SK-N-SH (cell line): ENCODE measurements at regions of chr3 and their contacts with region 1.

Region 1: GRCh38 chr3:48232734-48233133 is 8.2 kb upstream of the ZNF589 start:
- DNase-seq: peak; percentile 81
- H3K4me3 ChIP-seq: peak overlapping the region in 1 of 2 experiments; percentile 29; a peak in 1 of 4 replicates
- H3K27ac ChIP-seq: no peak overlapping the region; a peak in 1 of 4 replicates
- H3K4me1 ChIP-seq: peaks cover 0 to 2% of the 10 kb centered on the region in 2 experiments; a peak in 1 of 4 replicates
- H3K27me3 ChIP-seq: no peaks in the 10 kb centered on the region
- CTCF ChIP-seq: peak; percentile 65
- EP300 ChIP-seq: no peak
- RAD21 ChIP-seq: peak; percentile 79

Region 2: DNA sequence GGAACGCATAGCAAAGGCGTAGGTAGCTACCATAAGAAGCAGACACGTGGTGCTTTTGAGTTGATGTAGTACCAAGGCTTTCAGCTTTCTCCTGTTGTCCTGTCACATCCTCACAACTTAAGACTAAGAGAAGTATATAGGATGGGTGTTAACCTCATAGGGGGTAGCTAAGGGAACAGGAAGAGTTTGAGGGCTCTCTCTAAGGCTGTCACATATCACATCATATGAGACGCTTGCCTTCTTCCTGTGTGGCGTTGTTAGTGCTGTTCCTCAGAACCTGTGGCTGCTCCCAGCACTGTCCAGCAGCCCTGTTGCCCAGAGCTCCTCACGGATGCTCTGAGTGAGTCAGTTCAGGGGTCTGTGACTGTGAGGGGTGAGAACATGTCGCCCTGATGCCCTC is 415.1 kb before region 1 on chr3:
- CTCF ChIA-PET with region 1: no interaction called
- POLR2A ChIA-PET with region 1: no interaction called
- DNase-seq: no peak
- H3K4me3 ChIP-seq: no peak overlapping the region
- H3K27ac ChIP-seq: no peak overlapping the region
- H3K4me1 ChIP-seq: no peaks in the 10 kb centered on the region
- H3K27me3 ChIP-seq: no peaks in the 10 kb centered on the region
- CTCF ChIP-seq: no peak
- EP300 ChIP-seq: no peak
- RAD21 ChIP-seq: no peak

Region 3: GRCh38 chr3:48247401-48247811 is 14.7 kb after region 1 on chr3:
- CTCF ChIA-PET with region 1: interaction called, 10 read pairs
- POLR2A ChIA-PET with region 1: no interaction called
- DNase-seq: no peak
- H3K4me3 ChIP-seq: no peak overlapping the region
- H3K27ac ChIP-seq: peak overlapping the region in 1 of 2 experiments; percentile 68; a peak in 2 of 4 replicates
- H3K4me1 ChIP-seq: peaks cover 2 to 18% of the 10 kb centered on the region in 2 experiments; a peak in 3 of 4 replicates
- H3K27me3 ChIP-seq: no peaks in the 10 kb centered on the region
- CTCF ChIP-seq: no peak
- EP300 ChIP-seq: no peak
- RAD21 ChIP-seq: no peak